WTC11 (cell line): ENCODE measurements at regions of chr3 and their contacts with region 1.

Region 1: DNA sequence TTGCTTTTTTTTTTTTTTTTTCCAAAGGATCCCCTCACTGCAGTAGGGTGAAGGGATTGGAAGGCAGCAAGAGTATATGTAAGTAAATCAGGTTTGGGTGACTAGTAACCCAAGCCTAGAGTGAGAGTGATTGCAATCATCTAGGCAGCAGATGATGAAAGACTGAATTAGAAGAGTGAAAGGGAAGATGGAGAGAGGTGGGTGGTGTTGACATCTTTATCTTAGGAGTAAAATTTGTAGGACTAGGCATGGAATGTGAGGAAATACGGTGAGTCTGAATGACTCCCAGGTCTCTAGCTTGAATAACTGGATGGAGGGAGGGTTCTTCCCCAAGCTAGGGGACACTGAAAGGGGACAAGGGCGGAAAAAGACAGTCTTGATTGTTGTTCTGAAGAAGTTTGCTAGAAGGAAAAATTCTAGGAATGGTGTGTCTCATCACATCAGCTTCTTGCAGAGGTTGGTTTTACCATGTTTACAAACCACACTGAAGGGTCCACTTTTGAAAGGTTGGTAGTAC is 63.5 kb downstream of the TPRG1 start:
- DNase-seq: no peak
- ATAC-seq: no peak
- H3K4me3 Mint-ChIP-seq: no peak overlapping the region
- H3K27ac Mint-ChIP-seq: no peak overlapping the region
- H3K4me1 Mint-ChIP-seq: no peaks in the 10 kb centered on the region
- H3K27me3 Mint-ChIP-seq: no peaks in the 10 kb centered on the region; the same call in none of the 2 replicates
- CTCF ChIP-seq: no peak

Region 2: DNA sequence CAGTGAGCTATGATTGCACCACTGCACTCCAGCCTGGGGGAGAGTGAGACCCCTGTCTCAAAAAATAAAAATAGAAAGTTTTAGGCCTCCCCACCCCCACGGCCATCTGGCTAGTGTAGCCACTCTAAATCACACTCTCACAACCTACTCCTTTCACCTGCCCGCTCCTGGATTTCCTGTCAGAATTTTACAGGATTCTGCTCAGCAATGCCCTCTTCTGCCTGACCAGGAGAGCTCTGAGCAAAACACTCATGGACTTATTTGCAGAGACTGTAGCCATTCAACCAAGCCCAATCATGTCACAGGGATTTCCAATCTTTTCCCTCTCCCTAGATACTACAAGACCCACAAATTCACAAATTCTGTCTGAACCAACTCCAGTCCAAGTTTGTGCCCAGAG is 306.1 kb before region 1 on chr3:
- CTCF ChIA-PET with region 1: no interaction called
- POLR2A ChIA-PET with region 1: no interaction called
- DNase-seq: no peak
- ATAC-seq: peak; percentile 81
- H3K4me3 Mint-ChIP-seq: no peak overlapping the region
- H3K27ac Mint-ChIP-seq: no peak overlapping the region
- H3K4me1 Mint-ChIP-seq: peaks cover 10% of the 10 kb centered on the region
- H3K27me3 Mint-ChIP-seq: no peaks in the 10 kb centered on the region
- CTCF ChIP-seq: no peak

Region 3: DNA sequence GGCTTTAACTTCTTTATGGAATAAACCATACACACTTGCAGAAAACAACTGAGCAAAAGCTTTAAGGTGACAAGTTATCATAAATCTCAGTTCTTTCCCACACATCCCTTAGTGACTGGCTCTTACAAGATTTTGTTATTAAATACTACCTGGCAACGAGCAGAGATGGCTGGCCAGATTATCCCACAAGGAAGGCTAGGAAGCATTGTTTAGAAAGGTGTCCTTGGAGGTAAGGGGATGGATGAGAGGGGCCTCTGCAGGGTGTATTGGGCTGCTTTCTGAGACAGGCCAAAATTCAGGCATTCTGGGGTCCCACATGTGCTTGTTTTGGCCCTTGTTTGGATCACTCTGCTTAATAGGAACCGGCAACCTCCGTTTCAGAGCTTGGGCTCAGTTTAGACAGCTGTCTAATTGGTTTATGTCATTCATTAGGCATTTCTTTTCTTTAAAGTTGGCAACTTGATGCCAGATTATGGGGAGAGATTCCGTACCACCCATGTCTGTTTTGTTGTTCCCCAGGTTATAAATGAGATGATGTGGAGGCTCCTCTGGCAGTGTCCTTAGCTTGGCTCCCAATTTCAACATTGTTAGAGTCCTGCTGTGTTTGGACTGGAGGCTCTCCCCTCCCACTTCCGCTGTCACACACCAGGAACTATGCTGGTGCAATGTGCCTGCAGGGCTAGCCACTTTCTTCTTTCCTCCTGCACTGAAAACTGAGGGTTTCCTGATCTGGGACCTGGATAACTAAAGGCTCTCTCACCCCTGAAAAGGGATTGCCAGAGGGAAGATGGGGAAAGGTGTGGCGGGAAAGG is 57.6 kb after region 1 on chr3:
- CTCF ChIA-PET with region 1: no interaction called
- POLR2A ChIA-PET with region 1: no interaction called
- DNase-seq: no peak
- ATAC-seq: peak; percentile 77
- H3K4me3 Mint-ChIP-seq: no peak overlapping the region
- H3K27ac Mint-ChIP-seq: no peak overlapping the region
- H3K4me1 Mint-ChIP-seq: peaks cover 40% of the 10 kb centered on the region
- H3K27me3 Mint-ChIP-seq: no peaks in the 10 kb centered on the region
- CTCF ChIP-seq: no peak

Region 4: DNA sequence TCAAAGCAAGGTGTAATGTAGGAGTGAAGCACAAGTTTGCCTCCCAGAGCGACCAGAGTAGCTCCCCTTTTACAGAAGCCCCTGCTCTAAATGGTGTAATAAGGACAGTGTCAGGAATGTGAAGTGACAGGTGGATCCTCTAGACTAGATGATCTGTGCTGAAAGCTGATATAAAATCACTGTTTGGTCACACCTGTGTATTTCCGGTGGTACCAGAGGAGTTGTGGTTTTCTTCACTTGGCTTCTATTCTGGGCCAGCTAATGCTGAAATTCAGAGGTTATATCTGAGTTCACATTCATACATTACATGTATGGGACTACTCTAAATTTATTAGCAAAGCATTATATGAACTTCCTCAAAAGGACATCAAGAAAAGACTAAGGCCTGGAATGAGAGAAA is 1396.0 kb after region 1 on chr3:
- CTCF ChIA-PET with region 1: no interaction called
- POLR2A ChIA-PET with region 1: interaction called, 10 read pairs
- DNase-seq: no peak
- ATAC-seq: no peak
- H3K4me3 Mint-ChIP-seq: no peak overlapping the region
- H3K27ac Mint-ChIP-seq: no peak overlapping the region
- H3K4me1 Mint-ChIP-seq: peaks cover 5% of the 10 kb centered on the region; the same call in 1 of the 2 replicates
- H3K27me3 Mint-ChIP-seq: no peaks in the 10 kb centered on the region
- CTCF ChIP-seq: no peak